Naive thymus-derived CD8-positive, alpha-beta T cell (primary cell): ENCODE measurements at regions of chr19 and their contacts with region 1.

Region 1: GRCh38 chr19:17305517-17306284 is at the start of gene MRPL34:
- DNase-seq: peak; percentile 84 to 98 (median 93)
- ATAC-seq: peak; percentile 59 to 63
- H3K4me3 Mint-ChIP-seq: peak within 1 kb of the TSS; percentile 82 to 94 (median 91)
- H3K27ac Mint-ChIP-seq: peak within 1 kb of the TSS; percentile 41 to 96 (median 93)
- H3K4me1 Mint-ChIP-seq: peaks cover 29 to 64% (median 59%) of the 10 kb centered on the region in 4 donors
- H3K27me3 Mint-ChIP-seq: no peaks in the 10 kb centered on the region
- polyA plus RNA-seq, gene MRPL34: 216 to 221 (median 221) TPM

Region 2: DNA sequence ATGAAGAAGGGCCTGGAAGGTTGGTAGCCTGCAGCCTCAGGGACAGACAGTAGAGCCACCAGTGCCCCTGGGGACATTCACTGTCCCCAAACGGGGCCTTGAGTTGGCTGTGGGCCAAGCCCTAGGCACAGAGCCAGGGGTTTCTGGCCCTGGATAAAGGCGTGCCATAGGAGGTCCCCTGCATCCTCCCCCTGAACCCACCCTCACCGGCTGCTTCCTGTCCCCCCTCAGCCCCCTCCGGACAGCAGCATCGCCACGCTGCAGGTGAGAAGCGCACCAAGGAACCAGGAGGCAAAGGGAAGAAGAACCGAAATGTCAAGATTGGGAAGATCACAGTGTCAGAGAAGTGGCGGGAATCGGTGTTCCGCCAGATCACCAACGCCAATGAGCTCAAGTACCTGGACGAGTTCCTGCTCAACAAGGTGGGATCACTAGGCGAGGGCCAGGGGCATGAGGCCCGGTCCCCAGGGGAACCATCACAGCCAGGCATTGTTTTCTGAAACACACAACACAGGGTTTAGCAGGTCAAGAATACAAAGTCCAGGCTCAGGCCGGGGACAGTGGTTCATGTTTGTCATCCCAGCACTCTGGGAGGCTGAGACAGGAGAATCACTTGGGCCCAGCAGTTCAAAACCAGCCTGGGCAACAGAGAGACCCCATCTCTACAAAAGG is 105.2 kb before region 1 on chr19:
- POLR2A ChIA-PET with region 1: no interaction called
- DNase-seq: no peak
- ATAC-seq: no peak
- H3K4me3 Mint-ChIP-seq: no peak overlapping the region
- H3K27ac Mint-ChIP-seq: peak overlapping the region in 1 of 10 donors; percentile 39
- H3K4me1 Mint-ChIP-seq: peaks cover 0 to 7% (median 1%) of the 10 kb centered on the region in 4 donors
- H3K27me3 Mint-ChIP-seq: no peaks in the 10 kb centered on the region

Region 3: GRCh38 chr19:17282488-17283255 is 23.0 kb before region 1 on chr19:
- POLR2A ChIA-PET with region 1: interaction called, 10 read pairs
- DNase-seq: peak; percentile 63 to 89 (median 78)
- ATAC-seq: peak; percentile 91 to 94
- H3K4me3 Mint-ChIP-seq: peak overlapping the region; percentile 76 to 91 (median 83)
- H3K27ac Mint-ChIP-seq: no peak overlapping the region
- H3K4me1 Mint-ChIP-seq: peaks cover 4 to 9% (median 6%) of the 10 kb centered on the region in 4 donors
- H3K27me3 Mint-ChIP-seq: peaks cover 0 to 2% (median 0%) of the 10 kb centered on the region in 5 donors

Region 4: GRCh38 chr19:17292286-17293097 is 13.2 kb before region 1 on chr19:
- POLR2A ChIA-PET with region 1: interaction called, 21 read pairs
- DNase-seq: peak; percentile 69 to 86 (median 79)
- ATAC-seq: peak; percentile 95 to 97
- H3K4me3 Mint-ChIP-seq: peak overlapping the region; percentile 87 to 94 (median 90)
- H3K27ac Mint-ChIP-seq: peak overlapping the region in 9 of 10 donors; percentile 16 to 94 (median 80)
- H3K4me1 Mint-ChIP-seq: peaks cover 0 to 13% (median 6%) of the 10 kb centered on the region in 4 donors
- H3K27me3 Mint-ChIP-seq: peaks cover 0 to 1% (median under 1%) of the 10 kb centered on the region in 5 donors

Region 5: DNA sequence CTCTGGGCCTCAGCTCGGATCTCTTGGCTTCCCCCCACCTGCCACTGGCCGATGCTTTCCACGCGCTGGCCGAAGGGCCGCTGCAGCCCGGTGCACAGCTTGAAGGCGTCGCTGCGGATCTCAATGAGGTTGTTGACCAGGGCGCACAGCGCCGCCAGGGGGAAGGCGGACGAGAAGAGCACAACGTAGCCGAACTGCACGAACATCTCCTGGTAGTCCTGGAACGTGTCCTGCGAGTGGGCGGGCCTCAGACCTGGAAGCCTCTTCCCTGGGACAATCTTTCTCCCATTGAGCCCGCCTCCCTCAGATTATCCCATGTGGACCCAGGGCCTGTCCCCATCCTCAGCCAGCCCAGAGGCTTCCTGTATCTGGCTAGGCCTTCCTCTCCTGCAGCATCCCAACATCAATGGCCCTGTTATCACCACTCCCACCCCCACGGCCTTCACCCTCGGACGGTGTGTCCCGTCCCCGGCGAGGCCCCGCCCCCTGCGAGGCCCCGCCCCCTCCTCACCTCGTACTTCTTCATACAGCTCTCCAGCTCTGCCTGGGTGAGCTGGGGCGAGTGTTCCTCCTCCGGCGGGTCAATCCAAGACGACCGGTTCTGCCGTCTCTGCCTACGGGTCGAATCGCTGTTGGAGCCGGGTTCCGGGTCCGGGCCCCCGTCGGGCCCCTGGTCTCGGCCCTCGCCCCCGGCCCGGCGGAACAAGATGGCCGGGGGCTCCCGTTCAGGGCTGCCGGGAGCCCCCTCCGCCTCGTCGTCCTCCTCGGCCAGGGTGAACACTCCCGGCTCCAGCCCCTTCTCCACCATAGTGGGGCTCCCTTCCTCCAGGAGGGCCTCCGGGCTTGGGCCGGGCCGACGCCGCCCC is 22.2 kb after region 1 on chr19:
- POLR2A ChIA-PET with region 1: interaction called, 36 read pairs
- DNase-seq: peak in 7 of 10 donors; percentile 40 to 80 (median 51)
- ATAC-seq: peak; percentile 64 to 67
- H3K4me3 Mint-ChIP-seq: peak overlapping the region; percentile 67 to 87 (median 81)
- H3K27ac Mint-ChIP-seq: peak overlapping the region in 7 of 10 donors; percentile 41 to 93 (median 81)
- H3K4me1 Mint-ChIP-seq: peaks cover 6 to 27% (median 16%) of the 10 kb centered on the region in 4 donors
- H3K27me3 Mint-ChIP-seq: no peaks in the 10 kb centered on the region

Region 6: GRCh38 chr19:17334414-17335409 is 29.0 kb after region 1 on chr19 and contains the start of gene ANO8:
- POLR2A ChIA-PET with region 1: interaction called, 36 read pairs
- DNase-seq: peak; percentile 88 to 97 (median 95)
- ATAC-seq: peak; percentile 61 to 63
- H3K4me3 Mint-ChIP-seq: peak within 1 kb of the TSS; percentile 80 to 96 (median 90)
- H3K27ac Mint-ChIP-seq: peak within 1 kb of the TSS; percentile 76 to 96 (median 86)
- H3K4me1 Mint-ChIP-seq: peaks cover 14 to 62% (median 50%) of the 10 kb centered on the region in 4 donors
- H3K27me3 Mint-ChIP-seq: no peaks in the 10 kb centered on the region
- polyA plus RNA-seq, gene ANO8: 0.08 to 0.29 (median 0.20) TPM

Region 7: GRCh38 chr19:17394891-17395415 is 89.3 kb after region 1 on chr19:
- POLR2A ChIA-PET with region 1: no interaction called
- DNase-seq: peak in 4 of 10 donors; percentile 21 to 40 (median 32)
- ATAC-seq: no peak
- H3K4me3 Mint-ChIP-seq: peak overlapping the region in 4 of 10 donors; percentile 7 to 33 (median 30)
- H3K27ac Mint-ChIP-seq: peak overlapping the region in 8 of 10 donors; percentile 44 to 84 (median 72)
- H3K4me1 Mint-ChIP-seq: peaks cover 11 to 29% (median 25%) of the 10 kb centered on the region in 4 donors
- H3K27me3 Mint-ChIP-seq: no peaks in the 10 kb centered on the region